HCT116 (cell line): ENCODE measurements at regions of chr14 and their contacts with region 1.

Region 1: DNA sequence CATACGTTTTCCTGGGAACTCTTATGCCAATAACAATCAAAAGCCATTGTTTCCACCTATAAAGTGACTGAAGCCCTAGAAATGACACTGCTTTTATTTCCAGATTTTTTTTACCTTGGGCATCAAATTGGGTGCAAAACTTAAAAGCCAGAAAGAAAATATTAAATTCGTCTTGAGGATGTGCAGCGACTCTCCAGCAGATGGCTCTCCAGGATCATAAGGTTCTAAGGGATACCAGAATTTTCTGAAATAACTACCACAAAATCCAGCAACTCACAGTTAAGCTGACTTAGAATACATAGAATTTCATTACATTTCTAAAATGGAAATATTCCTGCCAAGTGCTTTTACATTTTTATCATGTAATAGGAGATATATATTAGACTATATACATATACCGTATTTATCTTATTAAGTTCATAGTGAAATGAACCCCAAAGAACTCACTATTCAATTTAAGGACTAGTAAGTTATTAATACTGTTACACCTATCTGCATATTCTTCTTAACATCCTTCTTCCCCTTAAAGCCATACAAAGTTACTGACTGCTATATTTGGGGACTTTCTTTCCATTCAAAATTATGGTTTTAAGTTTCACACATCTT is 44.0 kb downstream of the ARMH4 start:
- DNase-seq: peak; percentile 52
- ATAC-seq: peak; percentile 76
- H3K4me3 ChIP-seq: no peak overlapping the region
- H3K27ac ChIP-seq: no peak overlapping the region
- H3K4me1 ChIP-seq: no peaks in the 10 kb centered on the region
- H3K27me3 ChIP-seq: 0 out of 2 replicates have a peak, but pooled peaks cover 12% of the 10 kb centered on the region
- CTCF ChIP-seq: peak; percentile 71 to 79 (median 76)
- POLR2A ChIP-seq: no peak
- RAD21 ChIP-seq: peak; percentile 84

Region 2: DNA sequence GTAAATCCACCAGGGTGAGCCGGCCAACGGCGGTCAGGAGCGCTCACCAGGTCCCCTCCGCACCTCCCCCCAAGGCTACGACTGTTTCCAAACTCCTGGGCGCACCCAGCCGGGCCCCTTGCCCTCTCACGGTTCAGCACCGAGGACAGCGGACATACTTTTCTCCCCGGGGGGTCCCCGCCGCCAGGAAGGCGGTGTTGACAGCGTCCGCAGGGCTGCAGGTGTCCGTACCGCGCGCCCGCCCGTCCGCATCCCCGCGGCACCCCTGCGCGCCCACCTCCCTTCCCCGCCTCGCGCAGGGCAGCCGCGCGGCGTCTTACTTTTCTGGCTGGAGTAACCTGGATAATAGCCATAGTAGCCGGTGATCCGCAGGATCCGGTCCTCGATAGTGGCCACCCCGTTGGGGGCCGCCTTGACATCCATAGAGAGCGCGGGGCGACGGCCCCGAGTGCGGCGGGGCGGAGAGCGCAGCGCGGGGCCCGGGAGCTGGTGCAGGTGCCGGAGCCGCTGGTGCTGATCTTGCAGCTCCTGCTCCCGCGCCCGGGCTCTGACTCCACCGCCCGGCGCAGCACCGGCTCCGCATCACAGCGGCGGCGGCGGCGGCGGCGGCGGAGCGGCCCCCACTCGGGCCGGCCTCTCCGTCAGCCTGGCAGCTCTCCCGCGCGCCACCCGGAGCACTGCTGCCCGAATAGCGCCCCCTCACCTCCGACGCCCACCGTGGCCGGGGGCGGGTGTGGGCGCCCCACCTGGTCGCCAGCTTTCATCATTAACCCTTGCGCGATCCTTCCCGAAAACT is 242.4 kb before region 1 on chr14 and contains the start of gene SLC35F4:
- CTCF ChIA-PET with region 1: no interaction called
- POLR2A ChIA-PET with region 1: no interaction called
- RAD21 ChIA-PET with region 1: no interaction called
- intact Hi-C with region 1: no loop called
- DNase-seq: no peak
- ATAC-seq: no peak
- H3K4me3 ChIP-seq: no peak within 1 kb of the TSS
- H3K27ac ChIP-seq: no peak within 1 kb of the TSS
- H3K4me1 ChIP-seq: no peaks in the 10 kb centered on the region
- H3K27me3 ChIP-seq: peaks cover 2% of the 10 kb centered on the region; the same call in 1 of the 2 replicates
- CTCF ChIP-seq: no peak
- POLR2A ChIP-seq: no peak
- RAD21 ChIP-seq: no peak
- total RNA-seq, gene SLC35F4: not detected

Region 3: DNA sequence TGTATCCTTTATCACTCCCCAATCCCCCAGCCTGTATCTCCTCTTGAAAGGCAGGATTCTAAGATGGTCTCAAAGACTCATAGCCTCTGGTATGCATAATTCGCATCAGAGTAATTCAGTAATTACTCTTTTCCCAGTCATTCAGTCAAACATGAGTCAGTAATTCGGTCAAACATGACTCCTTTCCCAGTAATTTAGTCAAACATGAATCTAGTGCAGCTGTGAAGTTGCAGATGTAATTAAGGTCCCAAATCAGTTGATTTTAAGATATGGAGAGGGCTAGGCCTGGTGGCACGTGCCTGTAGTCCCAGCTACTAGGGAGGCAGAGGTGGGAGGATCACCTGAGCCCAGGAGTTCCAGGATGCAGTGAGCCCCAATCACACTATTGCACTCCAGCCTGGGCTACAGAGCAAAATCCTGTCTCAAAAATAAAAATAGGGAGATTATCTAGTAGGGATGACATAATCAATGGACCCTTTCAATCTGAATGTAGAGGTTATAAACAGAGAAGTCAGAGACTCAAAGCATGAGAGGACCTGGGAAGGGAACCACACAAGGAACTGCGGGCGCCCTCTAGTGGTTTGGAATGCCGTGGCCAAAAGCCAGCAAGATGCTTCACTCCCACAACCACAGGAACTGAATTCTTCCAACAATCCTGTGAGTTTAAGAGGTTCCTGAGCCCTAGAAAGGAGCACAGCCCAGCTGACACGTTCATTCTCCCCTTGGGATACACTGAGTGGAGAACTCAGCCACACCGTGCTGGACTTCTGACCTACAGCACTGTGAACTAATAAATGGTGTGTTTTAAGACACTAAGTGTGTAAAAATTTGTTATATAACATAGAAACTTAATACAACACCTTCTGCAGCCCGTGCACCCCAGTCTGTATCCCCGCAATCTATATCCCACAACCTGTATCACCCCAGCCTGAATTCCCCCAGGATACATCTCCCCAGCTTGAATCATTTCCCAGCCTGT is 58.2 kb after region 1 on chr14:
- CTCF ChIA-PET with region 1: interaction called, 6 read pairs
- POLR2A ChIA-PET with region 1: no interaction called
- RAD21 ChIA-PET with region 1: no interaction called
- intact Hi-C with region 1: loop called (anchors 1 kb)
- DNase-seq: peak; percentile 62
- ATAC-seq: peak; percentile 81
- H3K4me3 ChIP-seq: no peak overlapping the region
- H3K27ac ChIP-seq: no peak overlapping the region
- H3K4me1 ChIP-seq: peaks cover 5 to 18% of the 10 kb centered on the region in 2 experiments; a peak in 3 of 4 replicates
- H3K27me3 ChIP-seq: no peaks in the 10 kb centered on the region
- CTCF ChIP-seq: peak; percentile 41 to 94 (median 94); a peak in 5 of 6 replicates
- POLR2A ChIP-seq: no peak
- RAD21 ChIP-seq: peak; percentile 74

Region 4: GRCh38 chr14:58362798-58363412 is 254.9 kb after region 1 on chr14:
- CTCF ChIA-PET with region 1: interaction called, 4 read pairs
- POLR2A ChIA-PET with region 1: no interaction called
- RAD21 ChIA-PET with region 1: no interaction called
- intact Hi-C with region 1: loop called (anchors 1 kb)
- DNase-seq: peak; percentile 21
- ATAC-seq: peak; percentile 86
- H3K4me3 ChIP-seq: no peak overlapping the region
- H3K27ac ChIP-seq: no peak overlapping the region
- H3K4me1 ChIP-seq: no peaks in the 10 kb centered on the region
- H3K27me3 ChIP-seq: no peaks in the 10 kb centered on the region
- CTCF ChIP-seq: peak; percentile 14 to 52 (median 40); a peak in 5 of 6 replicates
- POLR2A ChIP-seq: no peak
- RAD21 ChIP-seq: peak; percentile 35

Region 5: GRCh38 chr14:58401585-58401984 is 293.5 kb after region 1 on chr14:
- CTCF ChIA-PET with region 1: interaction called, 5 read pairs
- POLR2A ChIA-PET with region 1: no interaction called
- RAD21 ChIA-PET with region 1: no interaction called
- intact Hi-C with region 1: loop called (anchors 2 kb)
- DNase-seq: no peak
- ATAC-seq: peak; percentile 79
- H3K4me3 ChIP-seq: no peak overlapping the region
- H3K27ac ChIP-seq: no peak overlapping the region
- H3K4me1 ChIP-seq: no peaks in the 10 kb centered on the region
- H3K27me3 ChIP-seq: no peaks in the 10 kb centered on the region
- CTCF ChIP-seq: peak in 2 of 3 experiments; percentile 19 to 33; a peak in 3 of 6 replicates
- POLR2A ChIP-seq: no peak
- RAD21 ChIP-seq: no peak